ENCODE measurements at regions of chr5 and their contacts with region 1.

Region 1: GRCh38 chr5:38433160-38433861 is 123.1 kb downstream of the LIFR start:
- DNase-seq: no peak
- ATAC-seq: no peak
- H3K4me3 ChIP-seq: no peak overlapping the region
- H3K27ac ChIP-seq: no peak overlapping the region
- H3K4me1 ChIP-seq: peaks cover 0 to 6% of the 10 kb centered on the region in 2 experiments; a peak in 1 of 4 replicates
- H3K27me3 ChIP-seq: no peaks in the 10 kb centered on the region
- CTCF ChIP-seq: no peak
- POLR2A ChIP-seq: no peak
- RAD21 ChIP-seq: no peak

Region 2: DNA sequence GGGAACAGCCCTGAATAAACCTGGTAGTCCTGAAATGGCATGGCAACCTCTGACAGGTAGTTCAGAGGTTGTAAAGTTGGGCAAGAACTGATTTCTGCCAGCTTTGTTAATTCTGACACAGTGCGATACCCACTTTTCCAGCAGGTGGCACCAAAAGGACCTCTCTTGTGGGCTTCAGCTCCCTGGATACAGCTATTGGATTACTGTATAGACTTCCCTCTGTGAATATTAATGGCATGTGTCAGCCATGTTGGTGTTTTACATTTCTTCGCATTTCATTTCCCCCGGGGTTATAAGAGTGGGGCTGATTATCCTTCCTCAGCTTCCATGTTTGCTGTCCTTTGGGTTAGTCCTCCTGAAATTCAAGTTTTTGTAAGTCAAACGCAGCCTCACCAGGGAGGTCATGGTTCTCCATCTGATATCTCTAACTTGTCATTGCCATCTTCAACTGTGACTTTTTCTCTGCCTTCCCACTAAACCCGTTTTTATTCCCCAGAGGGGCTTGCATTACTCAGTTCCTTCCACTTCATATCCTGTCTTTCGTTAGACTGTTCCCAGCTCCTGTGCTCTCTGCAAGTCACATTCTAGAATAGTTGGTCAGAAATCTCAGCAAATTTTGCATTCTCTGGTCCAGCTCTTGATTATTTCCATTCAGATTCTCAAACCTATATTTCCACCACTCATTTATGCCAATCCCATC is 12.5 kb before region 1 on chr5:
- CTCF ChIA-PET with region 1: interaction called, 17 read pairs
- POLR2A ChIA-PET with region 1: no interaction called
- RAD21 ChIA-PET with region 1: no interaction called
- intact Hi-C with region 1: no loop called
- DNase-seq: peak; percentile 60
- ATAC-seq: peak; percentile 96
- H3K4me3 ChIP-seq: no peak overlapping the region
- H3K27ac ChIP-seq: no peak overlapping the region
- H3K4me1 ChIP-seq: peaks cover 0 to 9% of the 10 kb centered on the region in 2 experiments; a peak in 1 of 4 replicates
- H3K27me3 ChIP-seq: 0 out of 2 replicates have a peak, but pooled peaks cover 5% of the 10 kb centered on the region
- CTCF ChIP-seq: peak; percentile 58 to 86 (median 80); a peak in 5 of 6 replicates
- POLR2A ChIP-seq: no peak
- RAD21 ChIP-seq: peak; percentile 77

Region 3: GRCh38 chr5:39055768-39056394 is 622.6 kb after region 1 on chr5:
- CTCF ChIA-PET with region 1: no interaction called
- POLR2A ChIA-PET with region 1: no interaction called
- RAD21 ChIA-PET with region 1: no interaction called
- intact Hi-C with region 1: no loop called
- DNase-seq: no peak
- ATAC-seq: no peak
- H3K4me3 ChIP-seq: no peak overlapping the region
- H3K27ac ChIP-seq: no peak overlapping the region
- H3K4me1 ChIP-seq: no peaks in the 10 kb centered on the region
- H3K27me3 ChIP-seq: no peaks in the 10 kb centered on the region
- CTCF ChIP-seq: no peak
- POLR2A ChIP-seq: no peak
- RAD21 ChIP-seq: no peak